HepG2 (cell line): ENCODE measurements at regions of chr7 and their contacts with region 1.

Region 1: GRCh38 chr7:99601656-99602310 is 3.7 kb downstream of the TMEM225B start:
- DNase-seq: no peak
- ATAC-seq: peak; percentile 75
- H3K4me3 ChIP-seq: no peak overlapping the region
- H3K27ac ChIP-seq: no peak overlapping the region
- H3K4me1 ChIP-seq: peaks cover 24% of the 10 kb centered on the region
- H3K27me3 ChIP-seq: no peaks in the 10 kb centered on the region
- CTCF ChIP-seq: peak; percentile 66
- EP300 ChIP-seq: no peak
- POLR2A ChIP-seq: no peak
- RAD21 ChIP-seq: no peak

Region 2: GRCh38 chr7:99616359-99617191 is 14.8 kb after region 1 on chr7 and contains the start of gene ZSCAN25:
- CTCF ChIA-PET with region 1: no interaction called
- POLR2A ChIA-PET with region 1: interaction called, 5 read pairs
- in situ Hi-C with region 1: no loop called
- intact Hi-C with region 1: loop called (anchors 1 kb)
- DNase-seq: peak; percentile 91
- ATAC-seq: peak; percentile 96
- H3K4me3 ChIP-seq: peak within 1 kb of the TSS; percentile 93 to 98 (median 96)
- H3K27ac ChIP-seq: peak within 1 kb of the TSS; percentile 96
- H3K4me1 ChIP-seq: peaks cover 25% of the 10 kb centered on the region
- H3K27me3 ChIP-seq: no peaks in the 10 kb centered on the region; a peak in 1 of 5 replicates
- CTCF ChIP-seq: peak; percentile 97
- EP300 ChIP-seq: no peak
- POLR2A ChIP-seq: peak; percentile 82 to 83
- RAD21 ChIP-seq: peak; percentile 71
- total RNA-seq, gene ZSCAN25: 16.3 and 16.8 TPM in 2 replicates